Tibial artery (tissue), 4 donors: ENCODE measurements at regions of chr16 and their contacts with region 1.

Region 1: GRCh38 chr16:20675488-20676267 is 21.8 kb downstream of the ACSM1 start:
- DNase-seq: peak; percentile 21 to 68
- H3K4me3 ChIP-seq: peak overlapping the region; percentile 44 to 59
- H3K27ac ChIP-seq: peak overlapping the region; percentile 69 to 75
- H3K4me1 ChIP-seq: peaks cover 0 to 40% (median 25%) of the 10 kb centered on the region in 4 donors
- H3K27me3 ChIP-seq: no peaks in the 10 kb centered on the region
- CTCF ChIP-seq: no peak

Region 2: GRCh38 chr16:20409398-20410120 is 266.1 kb before region 1 on chr16 and contains the start of gene ACSM5:
- intact Hi-C with region 1: no loop called
- DNase-seq: peak; percentile 73 to 80
- H3K4me3 ChIP-seq: peak within 1 kb of the TSS in 1 of 2 donors; percentile 4
- H3K27ac ChIP-seq: peak within 1 kb of the TSS in 1 of 2 donors; percentile 24
- H3K4me1 ChIP-seq: peaks cover 0 to 9% (median 0%) of the 10 kb centered on the region in 4 donors
- H3K27me3 ChIP-seq: no peaks in the 10 kb centered on the region
- CTCF ChIP-seq: no peak

Region 3: DNA sequence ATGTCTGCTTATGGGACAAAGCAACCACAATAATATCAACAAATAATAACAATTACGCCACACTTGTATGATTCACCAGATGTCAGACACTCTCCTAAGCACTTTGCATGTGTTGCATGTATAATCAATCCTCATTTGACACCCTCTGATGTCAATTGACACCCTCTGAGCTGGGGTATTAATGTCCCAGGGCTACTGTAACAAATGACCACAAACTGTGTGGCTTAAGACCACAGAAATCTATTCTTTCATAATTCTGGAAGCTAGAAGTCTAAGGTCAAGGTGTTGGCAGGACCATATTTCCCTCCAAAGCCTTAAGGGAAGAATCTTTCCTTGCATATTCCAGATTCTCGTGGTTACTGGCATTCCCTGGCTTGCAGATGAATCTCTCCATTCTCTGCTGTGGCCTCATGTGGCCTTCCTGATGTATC is 1947.7 kb after region 1 on chr16:
- intact Hi-C with region 1: loop called (anchors 10 kb)
- DNase-seq: no peak
- H3K4me3 ChIP-seq: no peak overlapping the region
- H3K27ac ChIP-seq: no peak overlapping the region
- H3K4me1 ChIP-seq: no peaks in the 10 kb centered on the region
- H3K27me3 ChIP-seq: peaks cover 0 to 6% of the 10 kb centered on the region in 2 donors
- CTCF ChIP-seq: no peak